Activated CD4-positive, alpha-beta T cell treated with anti-CD3 and anti-CD28 coated beads, Interleukin-2, amount 10 ng/mL, durations not matched to agents 24 days and 14 days (primary cell): ENCODE measurements at regions of chr11 and their contacts with region 1.

Region 1: DNA sequence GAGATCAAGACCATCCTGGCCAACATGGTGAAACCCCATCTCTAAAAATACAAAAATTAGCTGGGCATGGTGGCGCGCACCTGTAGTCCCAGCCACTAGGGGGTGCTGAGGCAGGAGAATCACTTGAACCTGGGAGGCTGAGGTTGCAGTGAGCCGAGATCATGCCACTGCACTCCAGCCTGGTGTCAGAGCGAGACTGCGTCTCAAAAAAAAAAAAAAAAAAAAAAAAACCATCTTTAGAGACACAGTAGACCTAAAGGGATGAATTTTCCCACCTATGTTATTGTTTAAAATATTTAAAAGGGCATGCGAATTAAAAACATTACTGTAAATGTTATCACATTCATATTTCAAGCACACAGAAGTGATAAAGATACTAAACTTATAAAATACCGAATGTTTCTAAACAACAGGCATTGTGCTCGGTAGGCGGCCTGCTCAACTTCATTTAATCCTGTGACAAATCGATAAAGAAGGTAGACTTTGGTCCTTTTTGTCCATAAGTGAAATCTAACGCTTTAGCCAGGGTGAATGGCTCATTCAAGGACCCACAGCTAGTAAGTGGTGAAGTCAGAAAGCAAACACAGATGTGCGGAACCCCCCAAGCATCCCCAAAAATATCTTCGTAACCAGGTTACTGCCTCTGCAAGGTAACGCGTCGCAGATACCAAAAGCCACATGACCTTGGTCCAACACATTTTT is 16.1 kb downstream of the NCAPD3 start:
- DNase-seq: peak; percentile 91
- H3K4me3 Mint-ChIP-seq: no peak overlapping the region
- H3K27ac Mint-ChIP-seq: no peak overlapping the region
- H3K4me1 Mint-ChIP-seq: peaks cover 11% of the 10 kb centered on the region
- H3K27me3 Mint-ChIP-seq: no peaks in the 10 kb centered on the region

Region 2: GRCh38 chr11:134244655-134245054 is 37.0 kb after region 1 on chr11:
- intact Hi-C with region 1: loop called (anchors 2 kb)
- DNase-seq: peak; percentile 72
- H3K4me3 Mint-ChIP-seq: no peak overlapping the region
- H3K27ac Mint-ChIP-seq: no peak overlapping the region
- H3K4me1 Mint-ChIP-seq: peaks cover 5% of the 10 kb centered on the region
- H3K27me3 Mint-ChIP-seq: no peaks in the 10 kb centered on the region